Gastrocnemius medialis (tissue), 4 donors: ENCODE measurements at regions of chr3 and their contacts with region 1.

Region 1: GRCh38 chr3:139389458-139390209 is at the start of gene COPB2:
- DNase-seq: peak; percentile 99
- ATAC-seq: peak; percentile 98 to 99
- H3K4me3 ChIP-seq: peak within 1 kb of the TSS; percentile 89 to 97 (median 92)
- H3K27ac ChIP-seq: peak within 1 kb of the TSS; percentile 89 to 94 (median 91)
- H3K4me1 ChIP-seq: peaks cover 50 to 57% of the 10 kb centered on the region in 2 donors
- H3K27me3 ChIP-seq: no peaks in the 10 kb centered on the region
- CTCF ChIP-seq: no peak
- POLR2A ChIP-seq: peak; percentile 76 to 83
- total RNA-seq, gene COPB2: 38.9 to 43.4 (median 42.1) TPM

Region 2: GRCh38 chr3:138923531-138923994 is 466.1 kb before region 1 on chr3:
- in situ Hi-C with region 1: no loop called
- intact Hi-C with region 1: no loop called
- DNase-seq: peak; percentile 49 to 68
- ATAC-seq: peak; percentile 85 to 94
- H3K4me3 ChIP-seq: no peak overlapping the region
- H3K27ac ChIP-seq: no peak overlapping the region
- H3K4me1 ChIP-seq: no peaks in the 10 kb centered on the region
- H3K27me3 ChIP-seq: no peaks in the 10 kb centered on the region
- CTCF ChIP-seq: peak; percentile 66 to 93 (median 79)
- POLR2A ChIP-seq: no peak

Region 3: DNA sequence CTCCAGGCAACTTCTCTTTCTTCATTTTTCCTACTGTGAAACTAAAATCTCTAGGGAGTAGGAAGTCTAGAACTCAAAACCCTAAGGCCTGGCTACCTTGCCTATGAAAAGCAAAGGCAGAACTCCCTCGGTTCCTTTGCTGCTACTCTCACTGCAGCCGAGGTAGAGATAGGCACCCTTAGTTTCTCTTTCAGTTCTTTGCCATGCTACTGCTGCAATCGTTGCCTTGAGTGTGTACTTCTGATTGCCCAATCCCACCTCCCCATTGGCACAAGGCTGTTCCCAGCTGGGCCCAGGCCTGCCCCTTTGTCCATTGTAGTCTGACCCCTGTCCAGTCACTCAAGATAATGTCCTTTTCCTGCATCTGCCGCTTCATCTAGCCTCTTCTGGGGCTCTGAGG is 138.1 kb before region 1 on chr3:
- in situ Hi-C with region 1: no loop called
- intact Hi-C with region 1: no loop called
- DNase-seq: no peak
- ATAC-seq: no peak
- H3K4me3 ChIP-seq: no peak overlapping the region
- H3K27ac ChIP-seq: no peak overlapping the region
- H3K4me1 ChIP-seq: no peaks in the 10 kb centered on the region
- H3K27me3 ChIP-seq: no peaks in the 10 kb centered on the region
- CTCF ChIP-seq: no peak
- POLR2A ChIP-seq: no peak

Region 4: DNA sequence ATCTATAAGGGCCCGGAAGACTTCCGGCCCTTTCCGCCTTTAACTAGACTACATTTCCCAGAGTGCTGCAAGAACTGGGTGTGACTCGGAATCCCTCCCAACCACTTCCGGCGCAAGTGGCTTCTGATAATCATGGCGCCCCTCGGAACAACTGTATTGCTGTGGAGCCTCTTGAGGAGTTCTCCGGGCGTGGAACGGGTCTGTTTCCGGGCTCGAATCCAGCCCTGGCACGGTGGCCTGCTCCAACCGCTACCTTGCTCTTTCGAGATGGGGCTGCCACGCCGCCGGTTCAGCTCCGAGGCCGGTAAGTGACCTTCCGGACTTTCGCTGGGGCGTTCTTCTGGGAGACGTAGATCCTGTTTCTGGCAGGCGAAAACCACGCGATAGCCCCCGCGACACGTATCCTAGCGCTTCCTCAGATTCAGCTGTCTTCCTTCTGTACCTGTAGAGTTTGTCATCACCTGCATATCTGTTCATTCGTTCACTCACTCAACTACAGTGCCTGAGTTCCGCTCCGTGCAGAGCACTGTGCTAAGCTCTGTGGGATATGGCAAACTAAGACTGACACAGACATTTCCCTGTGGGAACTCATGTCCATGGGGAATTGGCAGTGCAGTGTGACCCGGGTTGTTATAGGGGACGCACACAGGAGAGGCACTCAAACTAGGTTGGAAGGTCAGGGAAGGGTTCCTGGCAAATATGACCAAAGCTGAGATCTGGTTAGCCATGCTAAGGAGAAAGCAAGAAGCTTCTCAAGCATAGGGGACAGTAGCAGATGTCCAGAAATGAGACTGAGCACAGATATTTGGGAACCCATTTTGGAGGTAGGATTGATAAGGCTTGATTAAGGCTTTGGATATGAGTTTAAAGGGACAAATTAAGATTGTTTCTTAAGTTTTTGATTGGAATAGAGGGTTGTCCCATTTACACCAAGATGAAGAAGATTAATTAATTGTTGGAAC is 45.5 kb before region 1 on chr3 and contains the start of gene MRPS22:
- in situ Hi-C with region 1: no loop called
- intact Hi-C with region 1: loop called (anchors 2 kb)
- DNase-seq: peak; percentile 74 to 78
- ATAC-seq: peak; percentile 98 to 99
- H3K4me3 ChIP-seq: peak within 1 kb of the TSS; percentile 70 to 99 (median 90)
- H3K27ac ChIP-seq: peak within 1 kb of the TSS; percentile 86 to 93 (median 86)
- H3K4me1 ChIP-seq: peaks cover 19% of the 10 kb centered on the region in 2 donors
- H3K27me3 ChIP-seq: no peaks in the 10 kb centered on the region
- CTCF ChIP-seq: no peak
- POLR2A ChIP-seq: peak in 1 of 2 donors; percentile 31
- total RNA-seq, gene MRPS22: 96.4 to 140 (median 116) TPM

Region 5: DNA sequence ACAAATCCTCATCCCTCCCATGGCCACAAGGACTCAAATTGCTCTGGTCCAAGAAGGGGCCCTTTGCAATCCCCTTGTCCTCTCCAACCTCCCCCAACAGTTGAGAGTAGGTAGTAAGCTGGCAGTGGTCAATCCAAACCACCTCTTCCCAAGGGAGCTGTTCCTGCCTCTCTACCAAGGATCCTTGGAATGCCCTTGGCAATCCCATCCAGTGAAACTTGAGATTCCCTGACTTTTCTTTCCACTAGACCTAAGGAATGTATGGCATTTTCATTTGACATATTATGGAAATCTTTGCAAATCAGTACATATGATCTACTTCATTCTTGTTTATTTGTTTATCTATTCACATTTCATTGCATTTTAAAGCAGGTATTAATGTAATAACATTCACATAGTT is 91.5 kb after region 1 on chr3:
- in situ Hi-C with region 1: no loop called
- intact Hi-C with region 1: no loop called
- DNase-seq: no peak
- ATAC-seq: no peak
- H3K4me3 ChIP-seq: no peak overlapping the region
- H3K27ac ChIP-seq: no peak overlapping the region
- H3K4me1 ChIP-seq: no peaks in the 10 kb centered on the region
- H3K27me3 ChIP-seq: no peaks in the 10 kb centered on the region
- CTCF ChIP-seq: no peak
- POLR2A ChIP-seq: no peak

Region 6: GRCh38 chr3:139677388-139678155 is 287.9 kb after region 1 on chr3 and contains the start of gene NMNAT3:
- in situ Hi-C with region 1: no loop called
- intact Hi-C with region 1: loop called (anchors 10 kb)
- DNase-seq: peak; percentile 62 to 80
- ATAC-seq: peak; percentile 90 to 94
- H3K4me3 ChIP-seq: peak within 1 kb of the TSS; percentile 90 to 98 (median 95)
- H3K27ac ChIP-seq: peak within 1 kb of the TSS; percentile 87 to 92 (median 90)
- H3K4me1 ChIP-seq: peaks cover 9 to 16% of the 10 kb centered on the region in 2 donors
- H3K27me3 ChIP-seq: no peaks in the 10 kb centered on the region
- CTCF ChIP-seq: peak in 2 of 5 experiments; percentile 32 to 33
- POLR2A ChIP-seq: peak; percentile 23 to 34
- total RNA-seq, gene NMNAT3: 9.5 to 17.2 (median 12.8) TPM